Calu3 (cell line): ENCODE measurements at regions of chr2 and their contacts with region 1.

Region 1: DNA sequence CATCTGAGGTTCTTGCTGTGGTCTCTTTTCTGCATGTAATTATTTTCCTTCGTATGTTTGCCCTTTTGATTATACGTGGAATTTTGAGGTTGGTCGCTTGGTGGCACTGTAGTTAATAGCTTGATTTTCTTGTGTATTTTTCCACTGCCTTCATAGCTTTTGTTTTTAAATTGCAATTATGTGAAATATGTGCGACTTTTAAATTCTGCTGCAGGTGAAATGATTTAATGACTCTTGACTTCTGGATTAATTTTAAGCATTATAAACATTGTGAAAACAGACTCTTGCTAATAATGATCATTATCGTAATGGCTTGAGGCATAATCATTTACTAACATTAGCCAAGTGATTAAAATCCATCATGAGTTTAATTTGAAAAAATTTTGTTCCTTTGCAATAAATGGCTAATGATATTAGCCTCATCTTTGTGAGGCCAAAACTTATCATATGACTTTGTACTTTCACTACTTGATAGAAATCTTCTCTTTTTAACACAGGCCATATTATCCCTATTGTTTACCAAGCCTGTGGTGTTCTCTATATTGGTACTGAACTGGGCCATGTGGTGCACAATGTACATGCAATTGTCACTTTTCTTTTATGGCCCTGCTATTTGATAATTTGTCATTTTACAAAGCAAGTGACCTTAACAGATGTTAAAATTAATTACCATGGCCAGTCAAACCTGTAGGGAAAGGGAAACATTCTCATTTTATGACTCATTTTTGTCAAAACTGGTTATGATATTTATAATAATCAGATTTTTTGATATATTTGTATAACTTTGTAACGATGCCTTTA is 62.8 kb upstream of the NEUROD1 start:
- DNase-seq: peak; percentile 52
- H3K4me3 Mint-ChIP-seq: peak overlapping the region; percentile 48
- H3K27ac Mint-ChIP-seq: peak overlapping the region; percentile 85
- H3K4me1 Mint-ChIP-seq: peaks cover 43% of the 10 kb centered on the region
- H3K27me3 Mint-ChIP-seq: no peaks in the 10 kb centered on the region
- CTCF ChIP-seq: peak; percentile 47

Region 2: DNA sequence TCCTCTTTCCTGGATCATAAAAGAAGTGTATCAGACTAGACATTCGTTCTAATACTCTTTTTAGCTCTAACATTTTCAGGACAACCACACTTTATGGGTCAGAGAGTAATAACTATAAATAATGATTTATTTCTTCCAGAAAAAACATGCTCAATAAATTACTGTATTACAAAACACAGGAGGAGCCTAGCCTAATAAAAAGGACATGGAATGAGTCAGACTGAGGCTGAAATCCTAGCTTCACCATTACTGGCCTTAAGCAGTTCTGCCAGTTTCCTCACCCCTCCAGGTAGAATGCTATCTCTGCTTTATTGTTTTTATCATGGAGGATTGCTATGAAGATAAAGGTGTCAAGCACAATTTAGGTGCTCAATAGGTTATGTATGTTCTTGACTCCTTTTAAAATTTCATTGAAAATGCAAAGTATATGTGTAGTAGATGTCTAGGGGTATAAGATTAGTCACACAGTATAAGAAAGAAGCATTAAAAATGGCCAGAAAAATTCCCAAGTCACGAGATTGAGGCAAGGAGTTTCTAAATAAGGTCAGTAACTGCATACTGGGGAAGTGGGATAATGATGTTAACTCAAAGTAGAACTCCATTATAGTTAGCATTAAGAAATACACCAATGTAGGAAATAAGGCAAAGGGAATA is 42.7 kb after region 1 on chr2:
- CTCF ChIA-PET with region 1: interaction called, 9 read pairs
- intact Hi-C with region 1: loop called (anchors 2 kb)
- DNase-seq: peak; percentile 22
- H3K4me3 Mint-ChIP-seq: no peak overlapping the region
- H3K27ac Mint-ChIP-seq: peak overlapping the region; percentile 98
- H3K4me1 Mint-ChIP-seq: peaks cover 80% of the 10 kb centered on the region
- H3K27me3 Mint-ChIP-seq: no peaks in the 10 kb centered on the region
- CTCF ChIP-seq: no peak

Region 3: GRCh38 chr2:181810823-181811695 is 67.9 kb after region 1 on chr2:
- CTCF ChIA-PET with region 1: no interaction called
- intact Hi-C with region 1: loop called (anchors 2 kb)
- DNase-seq: peak; percentile 67
- H3K4me3 Mint-ChIP-seq: peak overlapping the region; percentile 38
- H3K27ac Mint-ChIP-seq: peak overlapping the region; percentile 95
- H3K4me1 Mint-ChIP-seq: peaks cover 78% of the 10 kb centered on the region
- H3K27me3 Mint-ChIP-seq: no peaks in the 10 kb centered on the region
- CTCF ChIP-seq: no peak

Region 4: DNA sequence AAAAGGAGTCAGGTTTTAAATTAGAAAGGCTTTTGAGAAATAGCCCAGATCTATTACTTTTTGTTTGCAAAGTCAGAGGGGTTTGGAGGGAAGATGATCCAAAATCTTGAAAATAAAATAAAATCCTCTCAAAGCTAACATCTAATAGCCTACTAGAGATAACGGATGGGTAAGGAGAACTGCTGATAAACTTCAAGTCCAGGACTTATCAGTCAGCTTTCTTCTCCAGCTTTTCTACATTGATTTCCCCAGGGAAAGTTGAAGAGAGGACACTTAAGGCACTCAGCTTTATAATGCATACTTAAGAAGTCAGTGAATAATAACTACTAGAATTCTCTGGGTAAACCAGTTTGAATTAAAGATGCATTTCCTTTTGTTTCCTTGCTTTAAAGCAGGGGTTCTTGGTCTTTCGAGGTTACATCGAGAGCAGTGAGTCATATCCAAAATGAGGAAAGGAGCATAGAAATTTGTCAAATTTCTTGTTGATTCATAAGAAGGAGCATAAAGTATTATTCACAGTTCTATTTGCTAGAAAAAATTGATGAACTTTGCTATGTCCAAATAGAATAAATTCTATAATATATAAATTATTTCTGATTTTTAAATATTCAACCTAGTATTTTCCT is 105.3 kb after region 1 on chr2:
- CTCF ChIA-PET with region 1: no interaction called
- intact Hi-C with region 1: loop called (anchors 5 kb)
- DNase-seq: no peak
- H3K4me3 Mint-ChIP-seq: no peak overlapping the region
- H3K27ac Mint-ChIP-seq: peak overlapping the region; percentile 67
- H3K4me1 Mint-ChIP-seq: peaks cover 54% of the 10 kb centered on the region
- H3K27me3 Mint-ChIP-seq: no peaks in the 10 kb centered on the region
- CTCF ChIP-seq: no peak

Region 5: GRCh38 chr2:181891966-181892798 is 149.1 kb after region 1 on chr2:
- CTCF ChIA-PET with region 1: interaction called, 12 read pairs
- intact Hi-C with region 1: no loop called
- DNase-seq: peak; percentile 62
- H3K4me3 Mint-ChIP-seq: peak overlapping the region; percentile 98
- H3K27ac Mint-ChIP-seq: peak overlapping the region; percentile 90
- H3K4me1 Mint-ChIP-seq: peaks cover 29% of the 10 kb centered on the region
- H3K27me3 Mint-ChIP-seq: no peaks in the 10 kb centered on the region
- CTCF ChIP-seq: no peak

Region 6: DNA sequence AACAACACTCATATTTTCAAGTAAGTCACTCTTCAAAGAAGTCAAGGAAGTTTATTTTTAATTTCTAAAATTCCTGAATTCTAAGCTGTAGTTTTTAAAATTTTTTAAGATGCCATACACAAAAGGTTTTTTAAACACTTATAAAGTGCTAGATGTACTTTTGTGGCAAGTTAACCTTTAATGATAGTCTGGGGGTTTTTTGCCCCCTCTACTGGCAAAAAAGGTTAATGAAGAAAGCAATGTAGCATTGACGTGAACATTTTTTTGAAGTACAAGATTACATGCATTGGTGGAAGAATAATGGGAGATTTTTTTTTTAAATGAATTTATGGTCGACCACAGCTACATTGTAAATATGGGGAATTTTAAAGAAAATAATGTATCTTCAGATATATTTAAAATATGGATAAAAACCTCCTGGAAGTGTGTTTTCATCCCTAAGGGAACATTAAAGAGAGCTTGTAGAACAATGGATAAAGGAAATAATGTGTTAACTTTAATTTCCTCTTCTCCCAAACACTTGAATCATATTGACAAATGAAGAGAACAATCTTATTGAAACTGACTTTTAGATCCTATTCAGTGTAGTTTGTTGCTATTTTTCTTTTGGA is 161.0 kb after region 1 on chr2:
- CTCF ChIA-PET with region 1: interaction called, 12 read pairs
- intact Hi-C with region 1: loop called (anchors 2 kb)
- DNase-seq: no peak
- H3K4me3 Mint-ChIP-seq: peak overlapping the region; percentile 68
- H3K27ac Mint-ChIP-seq: peak overlapping the region; percentile 95
- H3K4me1 Mint-ChIP-seq: peaks cover 74% of the 10 kb centered on the region
- H3K27me3 Mint-ChIP-seq: no peaks in the 10 kb centered on the region
- CTCF ChIP-seq: peak; percentile 59

Region 7: DNA sequence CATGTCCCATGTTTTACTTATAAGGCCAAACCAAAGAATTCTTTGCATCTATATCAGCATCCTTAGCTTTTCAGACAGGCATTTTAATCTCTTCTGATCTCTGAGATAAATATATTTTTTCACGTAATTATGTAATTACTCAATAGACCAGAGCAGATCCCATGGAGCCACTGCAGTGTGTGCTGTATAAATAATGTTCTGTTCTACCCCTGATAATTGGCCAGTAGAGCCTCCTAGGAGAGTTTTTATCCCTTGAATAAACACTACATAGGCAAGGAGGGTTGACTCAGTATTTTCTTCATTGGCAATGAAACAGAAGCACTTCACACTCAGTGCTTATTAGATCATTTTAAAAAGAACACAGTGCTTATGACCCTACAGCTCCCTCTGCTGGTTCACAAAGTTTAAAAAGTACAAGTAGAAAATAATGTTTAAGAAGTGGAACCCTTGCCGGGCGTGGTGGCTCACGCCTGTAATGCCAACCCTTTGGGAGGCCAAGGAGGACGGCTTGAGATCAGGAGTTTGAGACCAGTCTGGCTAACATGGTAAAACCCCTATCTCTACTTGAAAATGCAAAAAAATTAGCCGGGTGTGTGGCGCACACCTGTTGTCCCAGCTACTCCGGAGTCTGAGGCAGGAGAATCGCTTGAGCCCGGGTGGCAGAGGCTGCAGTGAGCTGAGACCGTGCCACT is 334.5 kb after region 1 on chr2:
- CTCF ChIA-PET with region 1: interaction called, 7 read pairs
- intact Hi-C with region 1: loop called (anchors 1 kb)
- DNase-seq: peak; percentile 70
- H3K4me3 Mint-ChIP-seq: peak overlapping the region; percentile 36
- H3K27ac Mint-ChIP-seq: no peak overlapping the region
- H3K4me1 Mint-ChIP-seq: no peaks in the 10 kb centered on the region
- H3K27me3 Mint-ChIP-seq: no peaks in the 10 kb centered on the region
- CTCF ChIP-seq: peak; percentile 57